Astrocyte of the cerebellum (primary cell): ENCODE measurements at regions of chr9 and their contacts with region 1.

Region 1: GRCh38 chr9:86788456-86788855 is 158.8 kb downstream of the GAS1 start:
- DNase-seq: no peak
- H3K4me3 ChIP-seq: no peak overlapping the region
- CTCF ChIP-seq: no peak

Region 2: DNA sequence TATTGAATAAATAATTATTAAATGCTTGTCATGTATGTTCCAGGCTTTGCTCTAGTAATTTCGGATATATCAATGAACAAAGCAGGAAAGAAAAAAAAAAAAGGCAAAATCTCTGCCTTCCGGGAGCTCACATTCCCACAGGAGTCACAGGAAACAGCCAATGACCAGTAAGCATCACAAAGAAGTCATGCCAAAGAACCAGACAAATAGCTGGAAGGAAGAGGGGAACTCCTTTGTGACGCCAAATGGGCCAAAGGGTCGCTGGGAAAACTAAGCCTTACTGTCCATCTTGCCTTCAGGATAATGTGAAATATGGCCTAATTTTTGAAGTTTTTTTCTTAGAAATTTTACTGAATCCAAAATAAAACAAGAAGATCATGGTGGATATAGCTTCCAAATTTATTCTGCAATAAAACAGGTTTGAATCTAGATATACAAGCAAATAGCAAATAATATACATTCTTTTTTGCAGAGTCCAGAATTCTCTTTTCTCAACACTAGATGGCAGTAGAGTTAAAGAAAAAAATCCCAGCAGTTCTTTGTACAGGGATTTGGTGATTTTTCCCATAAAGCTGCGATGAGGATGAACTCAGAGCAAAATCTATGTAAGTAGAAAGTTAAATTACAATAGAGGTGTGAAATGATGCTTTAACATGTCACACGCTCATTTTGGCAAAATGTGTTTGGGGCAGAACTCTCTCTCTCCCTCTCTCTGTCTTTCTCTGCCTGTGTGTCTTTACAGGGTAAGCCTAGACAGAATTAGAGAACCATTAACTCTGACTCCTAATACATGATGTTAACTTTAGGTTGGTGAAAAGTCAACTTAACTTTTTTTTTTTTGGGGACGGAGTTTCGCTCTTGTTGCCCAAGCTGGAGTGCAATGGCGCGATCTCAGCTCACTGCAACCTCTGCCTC is 374.2 kb before region 1 on chr9:
- in situ Hi-C with region 1: loop called (anchors 5 kb)
- DNase-seq: no peak
- H3K4me3 ChIP-seq: no peak overlapping the region
- CTCF ChIP-seq: peak; percentile 38